ENCODE measurements at regions of chr20 and their contacts with region 1.

Region 1: DNA sequence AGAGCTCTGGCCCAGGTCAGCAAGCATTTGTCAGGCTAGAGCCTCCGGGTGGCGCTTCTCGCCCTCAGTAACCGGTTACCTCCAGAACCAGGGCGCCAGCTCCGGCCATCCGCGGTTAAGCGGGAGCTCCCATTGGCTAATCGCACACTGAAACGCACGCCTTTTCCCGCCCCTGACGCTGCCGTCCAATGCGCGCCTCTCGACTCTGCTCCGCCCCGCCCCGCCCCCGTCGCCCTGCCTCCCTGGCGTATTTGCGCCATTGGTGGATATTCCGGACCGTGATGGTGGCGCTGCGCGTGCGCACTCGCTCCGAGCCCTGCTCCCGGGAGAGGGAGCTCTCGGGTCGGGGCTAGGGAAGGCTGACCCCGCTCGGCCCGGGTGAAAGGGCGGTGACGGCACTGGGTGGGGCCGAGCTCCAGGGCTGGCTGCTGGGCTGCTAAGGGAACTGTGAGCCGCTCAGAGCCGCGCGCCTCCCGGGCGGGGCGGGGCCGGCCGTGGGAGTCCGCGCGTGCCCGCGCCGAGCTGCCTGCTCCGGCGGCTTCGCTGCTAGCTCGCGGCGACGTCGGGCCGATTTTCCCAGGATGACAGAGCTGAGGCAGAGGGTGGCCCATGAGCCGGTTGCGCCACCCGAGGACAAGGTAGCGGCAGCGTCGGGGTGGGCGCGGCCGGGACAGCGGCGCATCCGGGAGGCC is at the start of gene CDS2:
- DNase-seq: peak; percentile 100
- ATAC-seq: peak; percentile 95 to 98 (median 97)
- H3K4me3 ChIP-seq: peak within 1 kb of the TSS; percentile 72 to 98 (median 92)
- H3K27ac ChIP-seq: peak within 1 kb of the TSS; percentile 90 to 99 (median 97)
- H3K4me1 ChIP-seq: peaks cover 7 to 50% (median 38%) of the 10 kb centered on the region in 12 donors
- H3K27me3 ChIP-seq: no peaks in the 10 kb centered on the region
- CTCF ChIP-seq: peak; percentile 53 to 89 (median 68)
- POLR2A ChIP-seq: peak; percentile 81 to 89
- total RNA-seq, gene CDS2: 64.5 to 105 (median 86.8) TPM

Region 2: DNA sequence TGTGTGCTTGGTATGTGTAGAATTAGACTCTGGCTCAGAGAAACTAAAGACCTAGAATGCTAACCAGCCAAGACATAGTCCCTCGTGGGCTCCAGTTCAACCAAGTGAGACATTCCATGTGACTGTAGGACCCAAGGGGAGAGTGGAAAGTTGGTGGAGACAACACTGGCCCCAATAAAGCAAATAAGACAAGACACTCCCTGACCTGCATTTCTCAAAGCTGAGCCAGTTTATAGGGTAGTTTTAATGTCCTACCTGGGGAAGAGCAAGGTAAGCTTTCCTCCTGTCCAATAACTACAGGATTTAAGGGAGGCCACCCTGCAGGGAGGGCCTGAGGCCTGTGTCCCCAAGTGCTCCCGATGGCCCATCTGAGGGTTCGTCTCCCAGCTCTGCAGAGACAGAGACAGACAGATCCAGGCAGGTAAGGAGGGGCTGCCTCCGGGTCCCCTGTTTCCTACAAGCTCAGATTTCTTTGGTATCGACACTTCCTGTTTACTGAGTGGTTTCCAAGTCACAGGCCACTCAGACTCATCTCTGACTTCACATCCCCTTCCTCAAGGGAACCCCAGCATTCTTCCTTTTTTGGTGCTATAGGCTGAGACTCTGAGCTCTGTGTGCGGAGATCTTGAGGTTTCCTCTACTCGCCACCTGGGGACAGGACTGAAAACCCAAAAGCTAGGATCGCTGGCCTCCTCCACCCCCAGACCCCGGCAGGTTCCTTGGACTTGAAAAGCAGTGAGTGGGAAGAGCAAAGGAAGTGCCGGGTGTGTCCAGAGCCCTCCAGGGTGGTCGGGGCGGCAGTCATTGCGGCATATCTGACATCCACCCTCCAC is 312.6 kb before region 1 on chr20:
- intact Hi-C with region 1: no loop called
- DNase-seq: peak in 1 of 5 donors; percentile 44
- ATAC-seq: peak; percentile 40 to 75 (median 59)
- H3K4me3 ChIP-seq: peak overlapping the region in 6 of 12 donors; percentile 8 to 58 (median 28)
- H3K27ac ChIP-seq: peak overlapping the region in 11 of 12 donors; percentile 18 to 97 (median 66)
- H3K4me1 ChIP-seq: peaks cover 0 to 73% (median 18%) of the 10 kb centered on the region in 12 donors
- H3K27me3 ChIP-seq: no peaks in the 10 kb centered on the region
- CTCF ChIP-seq: no peak
- POLR2A ChIP-seq: no peak

Region 3: DNA sequence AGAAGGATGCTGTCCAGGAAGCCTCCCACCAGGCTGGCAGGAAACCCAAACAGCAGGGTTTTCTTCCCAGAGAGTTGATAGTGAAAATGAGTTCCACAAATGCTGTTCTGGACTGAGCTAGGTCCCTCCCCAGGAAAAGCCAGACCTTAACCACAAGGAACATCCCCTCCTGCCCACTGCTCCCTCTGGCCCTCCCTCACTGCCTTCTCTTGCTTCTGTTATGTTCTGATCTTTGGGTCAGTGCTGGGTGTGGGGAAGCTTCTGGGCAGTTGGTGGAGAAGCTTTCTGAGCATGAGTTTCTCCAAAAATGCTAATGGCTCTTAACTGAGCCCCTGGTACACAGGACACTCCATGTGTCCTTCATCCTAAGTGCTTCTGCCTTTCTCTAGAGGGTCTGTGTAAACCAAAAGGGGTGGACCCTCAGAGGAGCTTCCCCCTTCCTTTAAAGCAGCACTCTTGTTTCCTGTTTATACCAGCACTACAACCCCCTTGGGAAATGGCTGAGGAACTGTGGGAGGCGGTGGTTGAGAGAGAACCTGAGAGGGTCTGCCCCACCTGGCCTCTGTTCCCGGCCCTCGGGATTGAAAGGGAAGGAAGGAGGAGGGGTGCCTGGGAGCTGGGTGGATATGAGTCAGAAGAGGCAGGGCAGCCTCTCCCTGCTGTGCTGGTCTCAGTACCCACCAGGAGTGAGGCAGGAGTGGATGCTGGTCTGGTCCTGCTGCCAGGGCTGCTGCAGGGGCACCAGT is 42.2 kb after region 1 on chr20:
- intact Hi-C with region 1: loop called in 5 of 10 experiments (anchors 2 to 5 kb)
- DNase-seq: peak in 4 of 5 donors; percentile 60 to 69 (median 64)
- ATAC-seq: peak; percentile 23 to 67 (median 52)
- H3K4me3 ChIP-seq: peak overlapping the region in 1 of 12 donors; percentile 1
- H3K27ac ChIP-seq: peak overlapping the region in 11 of 12 donors; percentile 63 to 86 (median 79)
- H3K4me1 ChIP-seq: peaks cover 30 to 100% (median 93%) of the 10 kb centered on the region in 12 donors
- H3K27me3 ChIP-seq: no peaks in the 10 kb centered on the region
- CTCF ChIP-seq: no peak
- POLR2A ChIP-seq: peak in 1 of 2 donors; percentile 44

Region 4: DNA sequence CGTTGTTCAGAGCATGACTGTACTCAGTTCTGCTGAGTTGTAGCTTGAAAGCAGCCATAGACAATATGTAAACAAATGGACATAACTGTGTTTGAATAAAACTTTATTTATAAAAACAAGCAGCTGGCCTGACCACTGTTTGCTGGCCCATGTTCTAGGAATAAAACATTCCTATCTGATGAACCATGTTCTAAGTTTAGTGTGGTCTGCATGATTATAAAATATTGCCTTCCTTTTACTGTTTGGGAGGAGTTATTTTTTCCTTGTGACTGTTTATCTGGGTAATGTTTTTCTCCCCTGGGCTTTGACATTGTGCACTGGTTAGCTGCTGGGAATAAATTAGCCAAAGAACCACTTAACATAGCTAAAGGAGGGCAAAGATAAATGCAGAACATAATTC is 55.3 kb after region 1 on chr20:
- intact Hi-C with region 1: loop called in 1 of 10 experiments (anchors 5 kb)
- DNase-seq: no peak
- ATAC-seq: peak; percentile 69 to 80 (median 76)
- H3K4me3 ChIP-seq: no peak overlapping the region
- H3K27ac ChIP-seq: peak overlapping the region; percentile 33 to 84 (median 68)
- H3K4me1 ChIP-seq: peaks cover 0 to 61% (median 36%) of the 10 kb centered on the region in 12 donors
- H3K27me3 ChIP-seq: no peaks in the 10 kb centered on the region
- CTCF ChIP-seq: no peak
- POLR2A ChIP-seq: no peak

Region 5: DNA sequence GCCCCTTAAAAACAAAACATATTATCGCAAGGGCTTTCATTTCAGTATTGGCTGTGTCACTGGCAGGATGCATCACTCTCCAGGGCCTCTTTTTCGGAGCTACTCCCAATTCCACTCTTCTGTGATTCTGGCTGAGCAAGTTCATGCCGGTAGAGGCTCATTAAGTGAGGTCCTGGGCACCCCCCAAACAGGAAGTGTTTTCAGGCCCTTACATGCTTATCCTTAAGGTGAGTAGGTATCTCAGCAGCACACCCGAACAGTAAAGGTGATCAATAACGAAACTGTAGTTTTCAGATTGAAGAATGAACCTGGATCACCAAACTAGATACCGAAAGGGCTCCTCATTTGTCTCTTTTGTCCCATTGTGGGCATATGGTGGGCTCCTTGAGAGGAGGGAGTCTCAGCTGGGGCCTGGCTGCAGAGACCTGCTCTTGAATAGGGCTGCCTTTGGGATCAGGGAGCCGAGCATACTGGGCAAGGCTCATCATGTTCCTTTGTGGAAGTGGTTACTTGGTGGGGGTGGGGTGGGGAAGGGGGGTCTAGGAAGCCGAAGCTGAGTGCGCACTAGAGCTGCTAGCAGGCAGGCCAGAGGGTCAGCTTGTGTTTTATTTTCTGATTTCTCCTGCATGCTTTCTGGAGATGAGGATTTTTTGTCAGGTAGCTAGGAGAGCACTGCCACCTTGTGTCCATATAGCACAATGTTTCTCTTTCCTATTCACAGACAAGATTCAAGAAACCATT is 65.3 kb after region 1 on chr20:
- intact Hi-C with region 1: loop called (anchors 1 to 2 kb)
- DNase-seq: peak in 1 of 5 donors; percentile 43
- ATAC-seq: peak; percentile 57 to 74 (median 72)
- H3K4me3 ChIP-seq: no peak overlapping the region
- H3K27ac ChIP-seq: peak overlapping the region in 11 of 12 donors; percentile 45 to 72 (median 54)
- H3K4me1 ChIP-seq: peaks cover 0 to 30% (median 16%) of the 10 kb centered on the region in 12 donors
- H3K27me3 ChIP-seq: no peaks in the 10 kb centered on the region
- CTCF ChIP-seq: peak; percentile 60 to 89 (median 82)
- POLR2A ChIP-seq: no peak

Region 6: GRCh38 chr20:5448449-5449118 is 321.9 kb after region 1 on chr20:
- intact Hi-C with region 1: loop called in 5 of 10 experiments (anchors 5 to 10 kb)
- DNase-seq: no peak
- ATAC-seq: no peak
- H3K4me3 ChIP-seq: no peak overlapping the region
- H3K27ac ChIP-seq: no peak overlapping the region
- H3K4me1 ChIP-seq: no peaks in the 10 kb centered on the region
- H3K27me3 ChIP-seq: peaks cover 0 to 11% (median 0%) of the 10 kb centered on the region in 9 donors
- CTCF ChIP-seq: peak in 11 of 12 donors; percentile 46 to 73 (median 63)
- POLR2A ChIP-seq: no peak

Measured in heart left ventricle (tissue), 16 donors.